Left ventricle myocardium superior (tissue), 1 donor: ENCODE measurements at regions of chr11 and their contacts with region 1.

Region 1: DNA sequence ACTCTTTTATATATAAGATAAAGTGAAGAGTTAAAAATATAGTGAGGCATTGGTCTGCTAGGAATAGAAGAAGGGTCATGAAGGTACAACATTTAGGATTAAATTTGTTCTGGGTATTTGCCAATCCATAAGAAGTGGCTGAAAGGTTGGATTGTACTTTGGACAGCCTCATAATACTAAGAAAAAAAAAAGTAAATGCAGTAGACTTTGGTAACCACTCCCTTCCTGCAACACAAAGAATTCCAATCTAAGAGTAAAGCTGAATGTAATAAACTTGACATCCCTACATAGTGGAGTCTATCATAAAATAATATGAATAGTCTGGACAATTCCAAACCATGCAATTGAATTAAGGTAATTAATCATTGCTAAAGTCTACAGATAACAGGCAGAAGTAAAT is 2294.4 kb downstream of the LRRC4C start:
- DNase-seq: no peak
- ATAC-seq: no peak

Region 2: GRCh38 chr11:38927993-38928392 is 237.0 kb before region 1 on chr11:
- intact Hi-C with region 1: loop called (anchors 5 kb)
- DNase-seq: no peak
- ATAC-seq: no peak